A549 (cell line): ENCODE measurements at regions of chr4 and their contacts with region 1.

Region 1: DNA sequence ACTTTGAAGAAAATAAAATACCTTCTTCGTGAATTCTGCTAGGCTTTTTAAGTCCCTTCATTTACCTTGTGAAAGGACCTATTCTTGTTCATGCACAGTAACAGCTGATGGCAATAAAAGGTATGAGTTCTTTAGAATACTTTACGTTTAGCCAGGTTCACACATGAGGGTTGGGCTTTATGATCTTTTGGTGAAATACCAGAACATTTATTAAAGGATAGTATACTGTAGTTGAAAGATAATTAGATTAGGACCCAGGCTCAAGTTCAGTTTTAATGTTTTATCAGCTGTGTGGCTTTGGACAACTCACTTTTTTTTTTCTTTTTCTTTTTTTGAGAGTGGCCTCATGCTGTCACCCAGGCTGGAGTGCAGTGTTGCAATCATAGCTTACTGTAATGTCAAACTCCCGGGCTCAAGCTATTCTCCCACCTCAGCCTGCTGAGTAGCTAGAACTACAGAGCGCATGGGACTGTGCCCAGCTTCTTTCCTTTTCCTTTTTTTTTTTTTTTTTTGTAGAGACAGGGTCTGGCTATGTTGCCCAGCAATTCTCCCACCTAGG is 28.2 kb upstream of the NEIL3 start:
- DNase-seq: no peak
- ATAC-seq: no peak
- H3K4me3 ChIP-seq: no peak overlapping the region
- H3K27ac ChIP-seq: no peak overlapping the region
- H3K4me1 ChIP-seq: no peaks in the 10 kb centered on the region
- CTCF ChIP-seq: no peak
- EP300 ChIP-seq: no peak
- POLR2A ChIP-seq: no peak
- RAD21 ChIP-seq: no peak

Region 2: GRCh38 chr4:177256950-177257349 is 24.5 kb before region 1 on chr4:
- CTCF ChIA-PET with region 1: no interaction called
- POLR2A ChIA-PET with region 1: no interaction called
- DNase-seq: no peak
- ATAC-seq: no peak
- H3K4me3 ChIP-seq: no peak overlapping the region
- H3K27ac ChIP-seq: no peak overlapping the region
- H3K4me1 ChIP-seq: no peaks in the 10 kb centered on the region
- CTCF ChIP-seq: no peak
- EP300 ChIP-seq: no peak
- POLR2A ChIP-seq: no peak
- RAD21 ChIP-seq: no peak

Region 3: DNA sequence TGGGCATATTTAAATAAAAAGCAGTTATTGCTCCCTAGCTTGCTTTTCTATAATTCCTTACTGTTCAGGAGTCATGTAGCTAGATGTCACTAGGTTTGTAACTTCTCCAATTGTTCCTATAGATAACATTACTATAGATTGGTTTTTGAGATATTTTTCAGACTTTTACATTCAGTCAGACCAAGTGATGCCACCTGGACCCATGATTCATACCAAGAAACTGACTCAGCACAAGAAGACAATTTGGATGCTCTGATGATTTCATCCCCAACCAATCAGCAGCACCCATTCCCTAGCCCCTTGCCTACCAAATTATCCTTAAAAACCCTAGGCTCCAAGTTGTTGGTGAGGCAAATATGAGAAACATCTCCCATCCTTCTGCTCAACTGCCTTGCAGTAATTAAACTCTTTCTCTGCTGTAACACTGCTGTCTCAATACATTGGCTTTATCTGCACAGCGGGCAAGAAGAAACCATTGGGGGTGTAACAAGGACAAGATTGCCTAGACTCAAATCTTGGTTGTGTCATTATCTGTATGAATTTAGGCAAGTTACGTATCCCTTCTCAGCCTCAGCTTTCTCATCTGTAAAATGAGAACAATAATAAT is 16.5 kb after region 1 on chr4:
- CTCF ChIA-PET with region 1: no interaction called
- POLR2A ChIA-PET with region 1: no interaction called
- DNase-seq: no peak
- ATAC-seq: no peak
- H3K4me3 ChIP-seq: no peak overlapping the region
- H3K27ac ChIP-seq: no peak overlapping the region
- H3K4me1 ChIP-seq: peaks cover 12% of the 10 kb centered on the region; the same call in 2 of the 3 replicates
- CTCF ChIP-seq: no peak
- EP300 ChIP-seq: no peak
- POLR2A ChIP-seq: no peak
- RAD21 ChIP-seq: no peak

Region 4: DNA sequence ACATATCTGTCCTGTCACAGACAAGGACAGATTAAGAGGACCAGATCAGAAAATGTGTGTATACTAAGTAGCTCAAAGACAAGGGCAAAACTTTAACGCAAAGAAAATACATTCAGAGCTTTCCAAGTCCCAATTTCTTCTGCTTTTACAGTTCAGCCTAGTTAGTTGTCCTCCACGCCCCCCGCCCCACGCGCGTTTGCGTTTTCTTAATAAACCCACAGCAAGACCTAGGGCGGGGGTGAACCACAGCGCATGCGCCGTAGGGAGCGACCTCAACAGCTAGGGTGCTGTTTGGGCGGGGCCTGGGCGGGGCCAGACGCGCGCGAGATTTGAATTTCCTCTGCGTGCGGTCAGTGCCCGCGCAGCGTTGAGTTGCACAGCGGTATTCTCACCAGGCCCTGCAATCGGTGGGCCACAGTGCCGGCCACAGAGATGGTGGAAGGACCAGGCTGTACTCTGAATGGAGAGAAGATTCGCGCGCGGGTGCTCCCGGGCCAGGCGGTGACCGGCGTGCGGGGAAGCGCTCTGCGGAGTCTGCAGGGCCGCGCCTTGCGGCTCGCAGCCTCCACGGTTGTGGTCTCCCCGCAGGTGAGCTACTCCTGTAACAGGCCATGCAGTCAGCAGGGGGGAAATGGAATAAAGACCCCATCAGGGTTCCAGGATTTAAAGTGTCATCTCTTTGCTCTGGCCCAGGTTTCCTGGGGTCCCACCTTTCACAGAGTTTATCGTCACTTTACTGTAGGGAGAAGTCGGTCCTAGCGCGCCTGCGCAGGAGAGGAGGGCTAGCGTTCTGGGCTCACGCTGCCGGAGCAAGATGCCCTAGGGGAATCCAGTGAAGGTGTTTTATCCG is 28.3 kb after region 1 on chr4 and contains the start of gene NEIL3:
- CTCF ChIA-PET with region 1: no interaction called
- POLR2A ChIA-PET with region 1: interaction called, 11 read pairs
- DNase-seq: peak; percentile 70 to 91
- ATAC-seq: peak; percentile 91 to 92
- H3K4me3 ChIP-seq: peak within 1 kb of the TSS; percentile 58
- H3K27ac ChIP-seq: peak within 1 kb of the TSS; percentile 84 to 90
- H3K4me1 ChIP-seq: peaks cover 39% of the 10 kb centered on the region
- CTCF ChIP-seq: no peak
- EP300 ChIP-seq: no peak
- POLR2A ChIP-seq: no peak
- RAD21 ChIP-seq: no peak
- polyA plus RNA-seq, gene NEIL3: 29.1 and 42.0 TPM in 2 replicates